ENCODE measurements at regions of chr17 and their contacts with region 1.

Region 1: DNA sequence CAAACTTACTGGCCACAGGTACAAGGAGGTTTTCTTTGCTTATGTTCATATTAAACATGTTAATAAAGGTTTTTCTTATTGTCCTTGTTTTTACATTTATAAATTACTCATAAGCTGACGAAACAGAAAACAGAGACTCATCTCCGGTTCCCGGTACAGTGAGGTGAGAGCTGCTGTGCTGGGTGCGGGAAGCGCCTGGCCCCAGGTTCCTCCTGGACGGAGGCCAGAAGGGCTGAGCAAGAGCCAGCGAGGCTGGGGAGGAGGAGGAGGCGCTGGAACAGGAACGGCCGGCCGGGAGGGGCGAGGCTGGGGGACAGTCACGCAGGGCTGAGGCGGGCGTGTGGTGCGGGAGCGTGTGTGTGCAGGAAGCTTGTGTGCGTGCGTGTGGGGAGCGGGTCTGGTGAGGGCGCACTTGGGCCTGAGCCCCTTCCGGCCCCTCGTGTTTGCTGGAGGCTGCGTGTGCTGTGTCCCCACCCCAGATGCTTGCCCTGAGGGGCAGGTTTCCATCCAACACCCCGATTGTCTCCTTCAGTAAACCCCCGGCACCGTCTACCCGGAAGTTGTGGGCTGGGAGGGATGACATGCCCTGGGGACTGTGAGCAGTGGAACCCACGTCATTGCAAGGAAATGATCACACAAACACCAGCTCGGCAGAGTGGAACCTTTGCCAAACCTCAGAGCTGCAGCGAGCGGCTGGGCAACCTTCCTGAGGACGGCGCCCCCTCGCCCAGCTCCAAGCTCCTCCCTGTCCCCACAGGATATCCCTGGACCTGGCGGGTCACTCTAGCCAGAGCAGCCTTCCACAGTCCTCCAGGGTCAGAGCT is 19.5 kb downstream of the CD7 start:
- DNase-seq: peak; percentile 84
- ATAC-seq: peak; percentile 64
- H3K4me3 Mint-ChIP-seq: peak overlapping the region; percentile 89
- H3K27ac Mint-ChIP-seq: peak overlapping the region; percentile 100
- H3K4me1 Mint-ChIP-seq: peaks cover 66% of the 10 kb centered on the region
- H3K27me3 Mint-ChIP-seq: no peaks in the 10 kb centered on the region

Region 2: GRCh38 chr17:81322271-81323082 is 975.4 kb before region 1 on chr17:
- POLR2A ChIA-PET with region 1: no interaction called
- DNase-seq: peak; percentile 54
- ATAC-seq: peak; percentile 64
- H3K4me3 Mint-ChIP-seq: no peak overlapping the region
- H3K27ac Mint-ChIP-seq: no peak overlapping the region
- H3K4me1 Mint-ChIP-seq: no peaks in the 10 kb centered on the region
- H3K27me3 Mint-ChIP-seq: peaks cover 1% of the 10 kb centered on the region

Region 3: DNA sequence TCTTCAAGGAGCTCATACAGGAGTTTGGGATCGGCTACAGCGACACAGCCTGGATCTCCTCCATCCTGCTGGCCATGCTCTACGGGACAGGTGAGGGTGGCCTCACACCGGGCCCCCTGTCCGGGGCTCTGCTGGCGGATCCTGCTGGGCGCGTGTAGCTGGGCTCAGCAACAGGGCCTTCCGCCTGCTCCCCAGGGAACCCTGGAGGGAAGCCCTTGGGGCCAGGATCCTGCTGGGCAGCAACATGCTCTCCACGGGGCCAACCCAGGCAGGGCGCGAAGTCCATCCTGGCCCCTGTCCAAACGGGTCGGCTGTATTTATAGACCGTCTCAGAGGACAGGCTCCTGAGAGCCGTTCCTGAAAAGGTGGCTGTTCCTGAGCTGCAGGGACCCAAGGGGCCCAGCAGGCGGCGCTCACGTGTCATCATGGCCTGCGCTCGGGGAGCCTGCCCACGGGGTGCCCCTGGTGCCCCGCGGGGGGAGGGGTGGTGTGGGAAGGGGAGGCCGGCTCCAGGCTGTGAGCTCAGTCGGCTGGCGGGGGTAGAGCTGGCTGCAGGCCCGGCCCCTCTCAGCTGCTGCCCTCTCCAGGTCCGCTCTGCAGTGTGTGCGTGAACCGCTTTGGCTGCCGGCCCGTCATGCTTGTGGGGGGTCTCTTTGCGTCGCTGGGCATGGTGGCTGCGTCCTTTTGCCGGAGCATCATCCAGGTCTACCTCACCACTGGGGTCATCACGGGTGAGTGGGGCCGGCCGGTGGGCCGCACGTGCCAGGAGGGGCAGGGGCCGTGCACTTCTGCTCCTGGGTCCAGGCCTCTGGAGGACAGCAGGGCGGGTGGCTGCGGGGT is 61.6 kb before region 1 on chr17:
- POLR2A ChIA-PET with region 1: interaction called, 13 read pairs
- DNase-seq: peak; percentile 81
- ATAC-seq: no peak
- H3K4me3 Mint-ChIP-seq: no peak overlapping the region
- H3K27ac Mint-ChIP-seq: no peak overlapping the region
- H3K4me1 Mint-ChIP-seq: peaks cover 26% of the 10 kb centered on the region
- H3K27me3 Mint-ChIP-seq: no peaks in the 10 kb centered on the region

Region 4: GRCh38 chr17:82273327-82274133 is 24.4 kb before region 1 on chr17 and contains the start of gene CSNK1D:
- POLR2A ChIA-PET with region 1: interaction called, 37 read pairs
- DNase-seq: peak; percentile 97
- ATAC-seq: peak; percentile 73
- H3K4me3 Mint-ChIP-seq: peak within 1 kb of the TSS; percentile 91
- H3K27ac Mint-ChIP-seq: peak within 1 kb of the TSS; percentile 99
- H3K4me1 Mint-ChIP-seq: peaks cover 29% of the 10 kb centered on the region
- H3K27me3 Mint-ChIP-seq: no peaks in the 10 kb centered on the region
- total RNA-seq, gene CSNK1D: 135 to 140 TPM

Region 5: GRCh38 chr17:82315703-82316358 is 17.9 kb after region 1 on chr17:
- POLR2A ChIA-PET with region 1: interaction called, 222 read pairs
- DNase-seq: peak; percentile 72
- ATAC-seq: peak; percentile 45
- H3K4me3 Mint-ChIP-seq: peak overlapping the region; percentile 90
- H3K27ac Mint-ChIP-seq: no peak overlapping the region
- H3K4me1 Mint-ChIP-seq: peaks cover 9% of the 10 kb centered on the region
- H3K27me3 Mint-ChIP-seq: no peaks in the 10 kb centered on the region

Measured in activated naive CD8-positive, alpha-beta T cell treated with anti-CD3 and anti-CD28 coated beads, Interleukin-2, amount 10 ng/mL, durations not matched to agents 7 days and 5 days (primary cell).